Mammary epithelial cell (primary cell): ENCODE measurements at regions of chr11 and their contacts with region 1.

Region 1: DNA sequence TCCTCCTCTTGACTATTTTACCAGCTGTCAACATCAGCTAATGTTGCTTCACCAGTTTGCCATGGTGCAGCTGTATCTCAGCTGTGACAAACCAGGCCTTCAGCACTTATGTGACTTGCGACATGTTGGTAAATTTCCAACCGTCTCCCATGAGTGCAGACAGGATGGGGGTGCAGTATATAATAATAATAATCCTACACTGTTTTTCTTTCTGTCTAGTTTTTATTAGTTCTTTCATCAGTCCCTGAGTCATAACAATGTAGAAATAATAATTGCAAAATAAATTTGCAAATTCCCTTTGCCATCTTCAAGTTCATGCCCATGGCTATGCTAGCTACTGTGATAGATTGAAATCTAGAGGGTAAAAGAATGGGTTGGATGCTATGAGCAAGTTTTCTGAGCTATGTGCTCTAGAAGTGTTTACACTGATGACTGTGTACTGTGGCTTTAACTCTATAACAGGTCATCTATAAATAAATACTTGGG is 4.9 kb downstream of the MMP13 start:
- DNase-seq: peak; percentile 78
- H3K4me3 ChIP-seq: no peak overlapping the region
- H3K27ac ChIP-seq: no peak overlapping the region
- H3K4me1 ChIP-seq: peaks cover 3% of the 10 kb centered on the region
- H3K27me3 ChIP-seq: no peaks in the 10 kb centered on the region
- CTCF ChIP-seq: no peak

Region 2: DNA sequence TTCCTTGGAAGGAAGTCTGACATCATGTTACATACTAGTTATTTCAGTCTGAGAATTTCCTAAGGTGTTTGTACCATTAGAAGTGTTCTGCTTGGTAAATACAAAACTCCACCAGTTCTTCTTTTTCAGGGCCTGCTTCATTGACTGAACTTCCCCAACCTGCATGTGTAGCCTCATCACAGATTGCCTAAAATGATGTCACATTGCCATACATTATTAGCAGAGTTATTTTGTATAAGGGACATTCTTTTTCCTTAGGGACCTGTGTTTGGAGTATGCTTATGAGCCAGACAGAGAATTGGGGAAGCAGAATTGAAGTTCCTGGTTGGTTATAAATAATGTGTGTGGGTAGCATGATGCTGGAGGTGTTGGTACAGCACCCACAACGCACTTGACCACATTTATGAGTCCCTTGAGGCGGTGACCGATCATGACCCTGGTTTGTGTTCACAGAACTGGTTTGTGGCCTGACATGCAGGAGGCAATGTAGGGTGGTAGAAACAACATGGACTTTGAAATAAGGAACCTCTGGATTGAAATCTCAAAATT is 403.7 kb before region 1 on chr11:
- CTCF ChIA-PET with region 1: no interaction called
- dilution Hi-C with region 1: no loop called
- in situ Hi-C with region 1: no loop called
- intact Hi-C with region 1: no loop called
- DNase-seq: no peak
- H3K4me3 ChIP-seq: no peak overlapping the region
- H3K27ac ChIP-seq: no peak overlapping the region
- H3K4me1 ChIP-seq: peaks cover 4% of the 10 kb centered on the region
- H3K27me3 ChIP-seq: no peaks in the 10 kb centered on the region
- CTCF ChIP-seq: no peak

Region 3: GRCh38 chr11:102727890-102728289 is 222.8 kb before region 1 on chr11:
- CTCF ChIA-PET with region 1: interaction called, 17 read pairs
- dilution Hi-C with region 1: no loop called
- in situ Hi-C with region 1: no loop called
- intact Hi-C with region 1: no loop called
- DNase-seq: peak; percentile 64
- H3K4me3 ChIP-seq: no peak overlapping the region
- H3K27ac ChIP-seq: peak overlapping the region; percentile 4
- H3K4me1 ChIP-seq: peaks cover 26% of the 10 kb centered on the region
- H3K27me3 ChIP-seq: no peaks in the 10 kb centered on the region
- CTCF ChIP-seq: no peak

Region 4: DNA sequence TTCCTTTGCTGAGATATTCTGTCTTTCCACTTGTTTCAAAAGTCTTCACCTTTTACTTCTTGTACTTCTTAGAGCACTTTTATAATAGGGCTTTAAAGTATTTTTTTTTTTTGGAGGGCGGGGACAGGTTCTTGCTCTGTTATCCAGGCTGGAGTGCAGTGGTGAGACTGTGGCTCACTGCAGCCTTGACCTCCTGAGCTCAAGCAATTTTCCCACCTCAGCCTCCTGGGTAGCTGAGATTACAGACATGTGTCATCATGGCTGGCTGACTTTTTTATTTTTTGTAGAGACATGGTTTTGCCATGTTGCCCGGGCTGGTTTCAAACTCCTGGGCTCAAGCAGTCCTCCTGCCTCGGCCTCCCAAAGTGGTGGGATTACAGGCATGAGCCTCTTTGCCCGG is 216.5 kb after region 1 on chr11:
- CTCF ChIA-PET with region 1: no interaction called
- dilution Hi-C with region 1: no loop called
- in situ Hi-C with region 1: no loop called
- intact Hi-C with region 1: no loop called
- DNase-seq: no peak
- H3K4me3 ChIP-seq: no peak overlapping the region
- H3K27ac ChIP-seq: no peak overlapping the region
- H3K4me1 ChIP-seq: no peaks in the 10 kb centered on the region
- H3K27me3 ChIP-seq: no peaks in the 10 kb centered on the region
- CTCF ChIP-seq: no peak